AG04450 (cell line): ENCODE measurements at regions of chr5 and their contacts with region 1.

Region 1: DNA sequence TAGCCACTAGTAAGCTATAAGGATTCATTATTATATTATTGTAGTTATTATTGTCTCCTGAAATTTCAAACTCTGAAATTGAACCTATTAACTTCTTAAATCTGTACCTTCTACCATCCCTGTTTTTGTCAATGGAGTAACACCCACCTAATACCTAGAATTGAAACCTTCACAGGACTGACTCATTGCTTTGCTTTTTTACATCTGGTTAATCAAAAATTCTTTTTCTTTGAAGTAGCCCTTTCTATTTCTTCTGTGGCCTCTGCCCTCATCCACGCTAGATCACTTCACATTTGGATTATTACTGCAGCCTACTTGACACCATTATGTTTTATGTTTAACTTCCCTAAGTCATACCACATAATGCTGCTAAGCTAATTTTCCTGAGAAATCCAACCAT is 35.6 kb downstream of the RBM27 start:
- DNase-seq: no peak
- H3K4me3 ChIP-seq: no peak overlapping the region
- H3K27ac ChIP-seq: no peak overlapping the region
- H3K27me3 ChIP-seq: no peaks in the 10 kb centered on the region
- CTCF ChIP-seq: no peak

Region 2: DNA sequence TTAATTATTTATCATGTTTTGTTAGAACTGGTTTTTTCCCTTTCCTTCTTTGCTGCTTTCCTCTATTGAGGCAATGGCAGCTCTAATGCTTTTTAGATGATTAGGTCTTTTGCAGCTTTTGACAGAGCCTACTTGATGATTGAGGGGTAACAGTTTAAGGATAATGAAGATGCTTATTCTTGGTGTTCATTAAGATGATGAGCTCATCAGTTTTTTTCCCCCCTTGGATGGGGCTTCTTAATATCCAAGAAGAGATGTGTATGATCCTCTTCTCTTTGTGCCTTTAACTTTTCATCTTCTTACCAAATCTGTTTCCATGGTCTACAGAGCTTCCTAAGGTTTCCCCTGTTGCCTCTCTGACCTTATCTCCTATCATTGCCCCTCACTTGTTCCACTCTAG is 19.7 kb before region 1 on chr5:
- CTCF ChIA-PET with region 1: no interaction called
- POLR2A ChIA-PET with region 1: interaction called, 11 read pairs
- DNase-seq: no peak
- H3K4me3 ChIP-seq: no peak overlapping the region
- H3K27ac ChIP-seq: no peak overlapping the region
- H3K27me3 ChIP-seq: no peaks in the 10 kb centered on the region
- CTCF ChIP-seq: no peak

Region 3: GRCh38 chr5:146249801-146250200 is 10.8 kb after region 1 on chr5:
- CTCF ChIA-PET with region 1: no interaction called
- POLR2A ChIA-PET with region 1: no interaction called
- DNase-seq: no peak
- H3K4me3 ChIP-seq: no peak overlapping the region
- H3K27ac ChIP-seq: no peak overlapping the region
- H3K27me3 ChIP-seq: no peaks in the 10 kb centered on the region
- CTCF ChIP-seq: no peak